ENCODE measurements at regions of chr2 and their contacts with region 1.

Region 1: GRCh38 chr2:197011799-197012641 is 85.5 kb upstream of the PGAP1 start:
- DNase-seq: peak; percentile 41
- CTCF ChIP-seq: peak; percentile 68

Region 2: DNA sequence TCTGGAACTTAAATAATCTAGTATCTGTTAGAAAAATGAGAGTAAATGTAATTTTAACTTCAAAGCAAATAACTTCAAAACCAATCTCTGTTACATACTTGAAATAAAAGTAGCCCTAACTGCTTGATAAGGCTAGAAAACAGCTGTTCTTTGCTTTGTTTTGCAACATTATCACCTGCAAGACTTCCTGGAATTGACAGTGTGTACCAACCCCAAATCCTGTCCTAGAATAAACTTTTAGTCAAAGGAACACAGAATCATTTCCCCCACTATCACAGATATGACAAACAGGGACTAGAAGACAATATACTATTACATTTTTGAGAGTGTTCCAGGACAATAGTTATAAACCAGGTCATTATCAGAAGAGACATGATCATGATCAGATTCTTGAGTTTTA is 19.8 kb after region 1 on chr2:
- CTCF ChIA-PET with region 1: interaction called, 24 read pairs
- POLR2A ChIA-PET with region 1: no interaction called
- DNase-seq: no peak
- CTCF ChIP-seq: no peak

Measured in GM10248 (cell line).